H1 (cell line): ENCODE measurements at regions of chr17 and their contacts with region 1.

Region 1: DNA sequence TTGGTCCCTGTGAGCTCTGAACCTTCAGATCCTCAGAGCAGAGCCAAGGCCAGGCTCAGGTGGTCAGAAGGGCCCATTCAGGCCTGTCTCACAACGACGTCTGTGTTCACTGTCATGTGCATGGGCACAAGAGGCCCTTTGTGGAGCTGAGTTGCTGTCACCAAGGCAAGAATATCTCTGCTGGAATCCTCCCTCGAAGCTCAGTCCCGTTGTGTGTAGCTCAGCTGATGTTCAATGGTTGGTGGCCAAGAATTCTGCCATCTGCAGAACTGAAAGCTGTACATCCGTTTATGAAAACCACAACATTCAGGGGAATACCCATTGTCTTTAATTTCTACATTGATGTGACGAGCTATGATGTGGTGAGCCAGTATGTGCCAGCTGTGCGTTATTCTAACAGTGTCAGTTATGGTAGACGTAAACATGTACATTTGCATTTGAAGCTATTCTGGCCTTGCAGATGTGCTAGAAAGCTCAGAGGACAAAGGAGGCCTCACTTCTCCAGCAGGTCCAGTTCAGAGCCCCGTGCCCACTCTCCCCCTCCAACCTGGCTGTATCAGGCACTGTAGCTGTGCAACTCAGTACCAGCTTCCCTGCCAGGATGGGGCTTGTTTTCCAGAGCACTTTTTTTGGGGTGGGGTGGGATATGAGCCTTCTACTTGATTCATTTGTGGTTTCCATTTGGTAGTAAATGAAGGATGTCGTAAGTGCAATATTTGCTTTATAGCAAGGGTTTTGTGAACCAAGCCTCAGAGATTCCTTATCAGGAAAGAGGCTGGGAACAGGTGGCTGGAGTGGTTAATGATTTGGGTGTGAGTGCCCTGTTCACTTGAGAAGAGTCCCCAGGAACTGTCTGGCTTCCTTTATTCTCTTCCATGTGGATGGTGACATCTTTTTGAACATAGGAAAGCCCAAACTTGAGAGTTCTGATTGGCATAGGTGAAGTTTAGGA is 56.1 kb downstream of the B9D1 start:
- DNase-seq: no peak
- H3K4me3 ChIP-seq: no peak overlapping the region
- H3K27ac ChIP-seq: no peak overlapping the region
- H3K4me1 ChIP-seq: peaks cover 0 to 4% (median 0%) of the 10 kb centered on the region in 4 experiments; a peak in 2 of 7 replicates
- H3K27me3 ChIP-seq: no peaks in the 10 kb centered on the region
- CTCF ChIP-seq: no peak
- EP300 ChIP-seq: no peak
- POLR2A ChIP-seq: no peak
- RAD21 ChIP-seq: no peak

Region 2: DNA sequence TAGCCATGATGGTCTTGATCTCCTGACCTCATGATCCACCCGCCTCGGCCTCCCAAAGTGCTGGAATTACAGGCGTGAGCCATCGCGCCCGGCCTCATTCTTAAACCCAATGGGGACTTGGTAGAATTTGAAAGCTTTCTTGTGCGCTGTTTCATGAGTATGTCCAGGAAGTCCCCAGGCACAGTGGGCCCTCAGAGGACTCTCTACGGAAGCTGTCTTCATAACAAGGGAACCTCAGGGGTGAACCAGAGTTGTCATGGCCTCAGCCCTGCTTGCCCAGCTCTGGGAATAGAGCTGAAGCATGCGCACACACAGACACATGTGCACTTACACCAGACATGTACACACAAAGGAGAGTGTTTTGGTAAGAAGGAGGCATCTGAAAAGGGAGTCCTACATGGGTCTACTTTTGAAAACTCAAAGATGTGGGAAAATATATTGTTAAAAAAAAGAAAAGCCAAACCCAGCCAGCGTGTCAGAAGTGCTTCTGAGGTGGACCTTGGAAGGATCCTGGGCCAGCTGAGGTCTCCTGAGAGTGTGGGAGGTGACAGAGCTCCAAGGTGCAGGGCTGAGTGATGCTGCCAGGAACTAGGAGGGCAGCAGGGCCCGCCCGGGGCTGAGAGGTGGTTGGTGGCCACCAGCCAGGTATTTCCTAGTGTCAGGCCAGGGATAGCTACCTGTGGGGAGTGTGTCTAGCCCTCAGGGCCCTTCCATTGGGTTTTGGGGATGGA is 14.6 kb before region 1 on chr17:
- CTCF ChIA-PET with region 1: interaction called, 10 read pairs
- POLR2A ChIA-PET with region 1: interaction called, 3 read pairs
- DNase-seq: no peak
- H3K4me3 ChIP-seq: no peak overlapping the region
- H3K27ac ChIP-seq: no peak overlapping the region
- H3K4me1 ChIP-seq: peaks cover 3 to 18% (median 10%) of the 10 kb centered on the region in 4 experiments
- H3K27me3 ChIP-seq: no peaks in the 10 kb centered on the region
- CTCF ChIP-seq: no peak
- EP300 ChIP-seq: no peak
- POLR2A ChIP-seq: no peak
- RAD21 ChIP-seq: no peak